ENCODE measurements at regions of chr11 and their contacts with region 1.

Region 1: DNA sequence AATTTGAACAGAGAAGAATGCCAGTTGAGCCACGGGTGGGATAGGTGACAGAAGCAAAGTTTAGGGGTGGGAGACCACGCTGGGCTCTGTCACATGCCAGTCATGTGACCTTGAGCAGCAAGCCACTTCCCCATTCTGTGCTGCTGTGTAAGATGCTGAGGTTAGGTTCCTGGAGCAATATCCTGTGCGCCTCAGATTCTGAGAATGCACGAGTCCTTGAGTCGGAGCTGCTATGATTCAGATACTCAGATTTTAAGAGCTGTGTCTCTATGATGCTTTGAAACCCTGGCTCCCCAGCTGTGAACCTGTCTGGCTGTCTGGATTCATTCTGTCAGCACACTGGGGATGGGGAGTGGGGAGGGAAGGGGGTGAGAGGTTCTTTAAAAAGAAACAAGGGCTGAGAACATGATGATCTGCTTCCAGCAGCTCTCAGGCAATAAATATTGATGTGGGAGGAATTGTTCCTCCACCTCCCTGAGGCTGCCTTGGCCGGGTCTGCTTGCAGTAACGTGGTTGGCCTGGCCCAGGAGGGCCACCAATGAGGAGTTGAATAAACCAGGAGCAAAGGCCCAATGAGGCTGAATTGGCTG is 24.0 kb downstream of the SLCO2B1 start:
- H3K4me3 Mint-ChIP-seq: peak overlapping the region; percentile 63
- H3K27ac Mint-ChIP-seq: peak overlapping the region; percentile 91
- H3K4me1 Mint-ChIP-seq: peaks cover 87% of the 10 kb centered on the region
- H3K27me3 Mint-ChIP-seq: no peaks in the 10 kb centered on the region

Region 2: DNA sequence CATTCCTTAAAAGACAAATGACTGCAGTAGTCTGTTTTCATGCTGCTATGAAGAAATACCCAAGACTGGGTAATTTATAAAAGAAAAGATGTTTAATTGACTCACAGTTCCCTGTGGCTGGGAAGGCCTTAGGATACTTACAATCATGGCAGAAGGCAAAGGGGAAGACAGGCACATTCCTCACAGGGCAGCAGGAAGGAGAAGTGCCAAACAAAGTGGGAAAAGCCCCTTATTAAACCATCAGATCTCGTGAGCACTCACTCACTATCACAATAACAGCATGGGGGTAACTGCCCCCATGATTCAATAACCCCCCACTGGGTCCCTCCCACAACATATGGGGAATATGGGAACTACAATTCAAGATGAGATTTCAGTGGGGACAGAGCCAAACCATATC is 61.8 kb before region 1 on chr11:
- intact Hi-C with region 1: no loop called
- H3K4me3 Mint-ChIP-seq: no peak overlapping the region
- H3K27ac Mint-ChIP-seq: no peak overlapping the region
- H3K4me1 Mint-ChIP-seq: no peaks in the 10 kb centered on the region
- H3K27me3 Mint-ChIP-seq: peaks cover 20% of the 10 kb centered on the region

Region 3: GRCh38 chr11:75147875-75148263 is 27.0 kb before region 1 on chr11:
- intact Hi-C with region 1: loop called (anchors 2 kb)
- H3K4me3 Mint-ChIP-seq: peak overlapping the region; percentile 67
- H3K27ac Mint-ChIP-seq: peak overlapping the region; percentile 84
- H3K4me1 Mint-ChIP-seq: peaks cover 94% of the 10 kb centered on the region
- H3K27me3 Mint-ChIP-seq: peaks cover 3% of the 10 kb centered on the region

Measured in dendritic cell treated with granulocyte-macrophage colony-stimulating factor and Interleukin-4, amounts not matched to agents 40 ng/mL and 50 ng/mL, for 4 days (primary cell).